Heart left ventricle (tissue), 16 donors: ENCODE measurements at regions of chr3 and their contacts with region 1.

Region 1: GRCh38 chr3:161409069-161409468 is 37.8 kb upstream of the SPTSSB start:
- DNase-seq: peak in 2 of 5 donors; percentile 23 to 25
- ATAC-seq: peak in 2 of 4 donors; percentile 45 to 47
- H3K4me3 ChIP-seq: no peak overlapping the region
- H3K27ac ChIP-seq: no peak overlapping the region
- H3K4me1 ChIP-seq: peaks cover 0 to 22% (median 13%) of the 10 kb centered on the region in 12 donors
- H3K27me3 ChIP-seq: no peaks in the 10 kb centered on the region
- CTCF ChIP-seq: peak in 11 of 12 donors; percentile 26 to 65 (median 52)
- POLR2A ChIP-seq: no peak

Region 2: DNA sequence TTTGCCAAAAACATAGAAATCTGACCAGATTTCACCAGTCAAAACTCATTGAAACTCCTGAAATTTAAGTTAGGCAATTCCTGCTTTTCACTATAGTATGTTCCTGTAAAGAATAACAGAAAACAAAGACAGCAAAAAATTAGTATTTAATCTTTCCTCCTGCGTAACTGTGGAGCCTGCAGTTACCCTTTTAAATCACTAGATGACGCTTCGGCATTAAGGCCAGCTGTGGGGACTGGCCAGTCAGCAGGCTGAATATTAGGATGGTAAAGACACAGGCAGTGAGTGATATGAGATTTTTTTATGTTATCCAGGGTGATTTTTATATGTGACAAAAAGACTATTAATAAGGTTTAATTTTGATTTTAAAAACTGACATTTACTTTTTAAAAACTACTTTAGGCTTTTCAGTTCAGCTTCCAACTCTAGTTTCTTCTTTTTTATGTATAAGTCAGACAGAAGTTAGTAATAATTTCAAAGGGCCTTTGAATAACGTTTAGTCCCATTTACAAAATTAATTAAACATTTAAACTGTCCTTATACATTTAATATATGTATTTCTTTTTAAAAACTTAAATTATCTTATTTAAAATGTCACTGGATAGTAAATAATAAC is 487.9 kb before region 1 on chr3:
- intact Hi-C with region 1: loop called in 1 of 10 experiments (anchors 10 kb)
- DNase-seq: peak in 3 of 5 donors; percentile 26 to 38 (median 27)
- ATAC-seq: peak in 3 of 4 donors; percentile 67 to 83 (median 79)
- H3K4me3 ChIP-seq: no peak overlapping the region
- H3K27ac ChIP-seq: no peak overlapping the region
- H3K4me1 ChIP-seq: peaks cover 0 to 39% (median 5%) of the 10 kb centered on the region in 12 donors
- H3K27me3 ChIP-seq: no peaks in the 10 kb centered on the region
- CTCF ChIP-seq: peak; percentile 67 to 92 (median 86)
- POLR2A ChIP-seq: no peak

Region 3: GRCh38 chr3:160956806-160957205 is 452.3 kb before region 1 on chr3:
- intact Hi-C with region 1: loop called in 1 of 10 experiments (anchors 10 kb)
- DNase-seq: no peak
- ATAC-seq: peak in 2 of 4 donors; percentile 46 to 51
- H3K4me3 ChIP-seq: no peak overlapping the region
- H3K27ac ChIP-seq: no peak overlapping the region
- H3K4me1 ChIP-seq: peaks cover 0 to 20% (median 8%) of the 10 kb centered on the region in 12 donors
- H3K27me3 ChIP-seq: no peaks in the 10 kb centered on the region
- CTCF ChIP-seq: peak in 8 of 12 donors; percentile 5 to 35 (median 23)
- POLR2A ChIP-seq: no peak

Region 4: DNA sequence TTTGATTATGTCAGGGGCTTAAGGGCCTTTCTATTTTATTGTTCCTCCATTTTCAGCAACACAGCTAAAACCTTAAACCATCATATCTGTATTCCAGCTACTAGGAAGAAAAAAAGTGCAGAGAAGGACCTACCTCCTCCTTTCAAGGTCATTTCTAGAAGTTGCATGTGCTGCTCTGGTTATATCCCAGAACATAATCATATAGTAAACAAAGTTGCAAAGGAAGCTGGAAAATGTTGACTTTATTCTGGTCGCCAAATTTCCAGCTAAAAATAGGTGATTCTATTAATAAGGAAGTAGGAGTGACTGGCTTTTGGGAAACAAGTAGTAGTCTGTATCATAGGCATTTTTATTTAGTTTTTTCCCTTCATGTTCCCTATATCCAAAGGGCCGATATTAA is 282.6 kb before region 1 on chr3:
- intact Hi-C with region 1: no loop called
- DNase-seq: no peak
- ATAC-seq: peak in 1 of 4 donors; percentile 18
- H3K4me3 ChIP-seq: no peak overlapping the region
- H3K27ac ChIP-seq: peak overlapping the region in 1 of 12 donors; percentile 13
- H3K4me1 ChIP-seq: peaks cover 0 to 10% (median 2%) of the 10 kb centered on the region in 12 donors
- H3K27me3 ChIP-seq: no peaks in the 10 kb centered on the region
- CTCF ChIP-seq: no peak
- POLR2A ChIP-seq: no peak

Region 5: GRCh38 chr3:161274719-161275298 is 134.3 kb before region 1 on chr3:
- intact Hi-C with region 1: loop called in 3 of 10 experiments (anchors 5 kb)
- DNase-seq: peak in 1 of 5 donors; percentile 15
- ATAC-seq: no peak
- H3K4me3 ChIP-seq: no peak overlapping the region
- H3K27ac ChIP-seq: no peak overlapping the region
- H3K4me1 ChIP-seq: peaks cover 0 to 3% (median 0%) of the 10 kb centered on the region in 12 donors
- H3K27me3 ChIP-seq: no peaks in the 10 kb centered on the region
- CTCF ChIP-seq: peak; percentile 34 to 71 (median 50)
- POLR2A ChIP-seq: no peak

Region 6: GRCh38 chr3:161358488-161358887 is 50.6 kb before region 1 on chr3:
- intact Hi-C with region 1: no loop called
- DNase-seq: no peak
- ATAC-seq: no peak
- H3K4me3 ChIP-seq: no peak overlapping the region
- H3K27ac ChIP-seq: no peak overlapping the region
- H3K4me1 ChIP-seq: no peaks in the 10 kb centered on the region
- H3K27me3 ChIP-seq: peaks cover 0 to 3% (median 0%) of the 10 kb centered on the region in 9 donors
- CTCF ChIP-seq: no peak
- POLR2A ChIP-seq: no peak

Region 7: DNA sequence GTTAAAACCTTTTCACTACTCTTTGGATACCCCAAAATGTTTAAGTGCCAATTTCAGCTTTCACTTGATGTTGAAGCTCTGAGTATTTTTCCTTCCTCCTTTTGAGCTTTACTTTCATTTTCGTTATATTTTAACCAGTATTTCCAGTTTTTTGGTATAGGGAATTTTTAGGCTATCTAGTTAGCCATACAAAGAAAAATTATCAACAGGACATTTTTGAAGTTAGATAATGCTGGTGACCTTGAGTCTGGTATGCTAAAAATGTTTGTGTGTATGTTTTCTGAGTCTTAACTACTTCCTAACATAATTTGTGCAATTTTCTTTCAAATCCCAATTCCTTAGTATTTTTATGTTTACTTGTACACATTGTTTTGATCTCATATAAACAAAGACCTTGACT is 372.3 kb after region 1 on chr3:
- intact Hi-C with region 1: no loop called
- DNase-seq: no peak
- ATAC-seq: no peak
- H3K4me3 ChIP-seq: peak overlapping the region in 2 of 12 donors; percentile 8 to 11
- H3K27ac ChIP-seq: no peak overlapping the region
- H3K4me1 ChIP-seq: peaks cover 0 to 8% (median 0%) of the 10 kb centered on the region in 12 donors
- H3K27me3 ChIP-seq: no peaks in the 10 kb centered on the region
- CTCF ChIP-seq: no peak
- POLR2A ChIP-seq: no peak